Activated T-helper 1 cell treated with anti-CD3 and anti-CD28 coated beads, Interleukin-12 subunit alpha, Interleukin-12 subunit beta, Interleukin-2, Interleukin-4 antibody, amounts not matched to agents 30 ng/mL and 10 ng/mL and 1 ng/mL, durations not matched to agents 14 hours and 24 hours and 36 hours (primary cell): ENCODE measurements at regions of chr17 and their contacts with region 1.

Region 1: GRCh38 chr17:59572301-59572928 is 7.0 kb downstream of the DHX40 start:
- DNase-seq: no peak
- H3K4me3 Mint-ChIP-seq: no peak overlapping the region
- H3K27ac Mint-ChIP-seq: peak overlapping the region; percentile 32
- H3K4me1 Mint-ChIP-seq: peaks cover 14% of the 10 kb centered on the region
- H3K27me3 Mint-ChIP-seq: no peaks in the 10 kb centered on the region

Region 2: DNA sequence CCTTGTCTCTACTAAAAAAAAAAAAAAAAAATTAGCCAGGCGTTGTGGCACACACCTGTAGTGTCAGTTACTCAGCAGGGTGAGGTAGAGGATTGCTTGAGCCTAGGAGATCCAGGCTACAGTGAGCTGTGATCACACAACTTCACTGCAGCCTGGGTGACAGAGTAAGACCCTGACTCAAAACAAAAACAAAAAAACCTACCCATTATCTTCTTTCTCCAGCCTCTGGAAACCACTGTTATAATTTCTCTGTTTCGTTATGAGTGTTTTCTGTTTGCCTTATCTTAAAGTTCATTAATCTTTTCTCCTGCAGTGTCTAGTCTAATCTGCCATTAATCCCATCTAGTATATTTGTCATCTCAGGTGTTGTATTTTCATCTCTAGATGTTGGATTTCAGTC is 28.7 kb after region 1 on chr17:
- intact Hi-C with region 1: loop called (anchors 1 kb)
- DNase-seq: no peak
- H3K4me3 Mint-ChIP-seq: no peak overlapping the region
- H3K27ac Mint-ChIP-seq: peak overlapping the region; percentile 3
- H3K4me1 Mint-ChIP-seq: peaks cover 14% of the 10 kb centered on the region
- H3K27me3 Mint-ChIP-seq: no peaks in the 10 kb centered on the region